Motor neuron (in vitro differentiated cells): ENCODE measurements at regions of chr11 and their contacts with region 1.

Region 1: DNA sequence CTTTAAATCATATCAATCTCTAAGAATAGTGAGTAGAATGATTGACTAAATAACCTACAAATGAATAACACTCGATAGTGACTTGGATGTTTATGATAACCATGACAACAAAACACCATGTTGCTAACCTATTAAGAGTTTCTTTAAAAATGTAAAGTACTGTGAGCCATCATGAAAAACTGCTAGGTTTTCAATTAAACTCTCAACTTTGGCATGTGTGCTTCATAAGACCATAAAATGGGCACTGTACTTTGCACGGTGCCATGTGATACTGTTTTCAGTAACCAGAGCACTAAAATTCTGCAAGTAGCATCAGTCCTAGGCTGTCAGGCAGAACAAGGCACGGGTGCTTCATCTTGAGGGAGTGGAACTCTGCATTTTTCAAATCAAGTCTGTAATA is 96.2 kb upstream of the TRIM77 start:
- ATAC-seq: peak in 1 of 8 experiments; percentile 9
- H3K4me3 ChIP-seq: no peak overlapping the region
- H3K27ac ChIP-seq: no peak overlapping the region
- H3K4me1 ChIP-seq: peaks cover 4 to 6% of the 10 kb centered on the region in 2 donors

Region 2: DNA sequence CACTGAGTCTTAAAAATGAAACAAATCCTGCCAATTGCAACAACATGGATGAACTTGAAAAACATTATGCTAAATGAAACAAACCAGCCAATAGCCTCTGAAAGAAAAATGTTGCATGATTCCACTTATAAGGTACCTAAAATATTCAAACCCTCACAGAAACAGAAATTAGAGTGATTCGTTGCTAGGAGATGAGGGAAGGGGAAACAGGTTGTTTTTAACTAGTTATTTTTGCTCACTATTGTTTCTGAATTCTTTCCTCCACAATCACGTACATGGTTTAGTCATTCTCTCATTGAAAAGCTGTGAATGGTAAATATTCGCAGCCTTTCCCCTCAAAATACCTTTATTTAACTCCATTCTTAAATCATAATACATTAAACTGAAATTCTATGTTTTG is 450.2 kb before region 1 on chr11:
- in situ Hi-C with region 1: no loop called
- ATAC-seq: no peak
- H3K4me3 ChIP-seq: no peak overlapping the region
- H3K27ac ChIP-seq: no peak overlapping the region
- H3K4me1 ChIP-seq: no peaks in the 10 kb centered on the region

Region 3: GRCh38 chr11:89327885-89328284 is 286.0 kb before region 1 on chr11:
- in situ Hi-C with region 1: loop called in 1 of 9 experiments (anchors 25 kb)
- ATAC-seq: peak in 1 of 8 experiments; percentile 17
- H3K4me3 ChIP-seq: no peak overlapping the region
- H3K27ac ChIP-seq: no peak overlapping the region
- H3K4me1 ChIP-seq: no peaks in the 10 kb centered on the region